ENCODE measurements at regions of chr11 and their contacts with region 1.

Region 1: DNA sequence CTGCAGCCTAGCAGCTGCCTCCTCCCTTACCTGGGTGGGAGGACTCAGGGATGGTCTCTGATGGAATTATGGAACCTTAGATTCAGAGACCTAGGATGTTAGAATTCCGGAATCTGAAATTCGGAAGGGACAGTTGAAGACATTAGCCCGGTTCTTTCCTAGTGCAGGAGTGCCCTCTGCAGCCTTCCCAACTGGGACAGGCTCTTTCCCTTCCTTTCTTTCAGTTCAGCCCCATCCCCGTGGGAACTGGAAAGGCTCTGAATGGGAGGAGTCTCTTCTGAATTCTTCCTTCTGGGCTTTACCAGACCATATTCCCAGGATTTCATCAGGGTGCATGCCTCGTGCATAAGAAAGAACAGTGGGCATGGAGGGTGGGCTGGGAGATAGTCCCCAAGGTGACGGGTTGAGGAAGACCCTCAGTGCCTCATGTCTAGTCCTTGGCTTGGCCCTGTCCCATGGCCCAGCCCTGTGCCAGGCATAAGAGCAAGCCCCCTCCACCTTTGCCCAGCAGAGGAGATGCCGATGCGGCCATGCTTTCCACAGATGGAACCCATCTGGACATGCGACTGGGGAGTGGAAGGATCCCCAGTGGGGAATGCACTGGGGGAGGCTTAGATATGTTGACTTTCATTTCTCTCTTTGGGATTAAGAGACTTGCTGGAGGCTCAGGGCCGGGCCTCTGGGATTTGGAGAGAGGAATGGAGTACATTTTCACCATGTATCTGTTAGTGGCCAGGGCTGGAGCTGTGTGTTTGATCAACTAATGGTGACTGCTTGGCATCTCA is 14.4 kb downstream of the DNAJB13 start:
- DNase-seq: no peak
- H3K4me3 ChIP-seq: no peak overlapping the region
- H3K27ac ChIP-seq: no peak overlapping the region
- H3K4me1 ChIP-seq: peaks cover 0 to 8% of the 10 kb centered on the region in 2 donors
- H3K27me3 ChIP-seq: no peaks in the 10 kb centered on the region
- CTCF ChIP-seq: no peak
- POLR2A ChIP-seq: no peak

Region 2: GRCh38 chr11:74090701-74091100 is 125.4 kb after region 1 on chr11:
- intact Hi-C with region 1: loop called (anchors 10 kb)
- DNase-seq: no peak
- H3K4me3 ChIP-seq: no peak overlapping the region
- H3K27ac ChIP-seq: no peak overlapping the region
- H3K4me1 ChIP-seq: peaks cover 0 to under 1% of the 10 kb centered on the region in 2 donors
- H3K27me3 ChIP-seq: no peaks in the 10 kb centered on the region
- CTCF ChIP-seq: peak in 2 of 6 experiments; percentile 16 to 36
- POLR2A ChIP-seq: no peak

Region 3: DNA sequence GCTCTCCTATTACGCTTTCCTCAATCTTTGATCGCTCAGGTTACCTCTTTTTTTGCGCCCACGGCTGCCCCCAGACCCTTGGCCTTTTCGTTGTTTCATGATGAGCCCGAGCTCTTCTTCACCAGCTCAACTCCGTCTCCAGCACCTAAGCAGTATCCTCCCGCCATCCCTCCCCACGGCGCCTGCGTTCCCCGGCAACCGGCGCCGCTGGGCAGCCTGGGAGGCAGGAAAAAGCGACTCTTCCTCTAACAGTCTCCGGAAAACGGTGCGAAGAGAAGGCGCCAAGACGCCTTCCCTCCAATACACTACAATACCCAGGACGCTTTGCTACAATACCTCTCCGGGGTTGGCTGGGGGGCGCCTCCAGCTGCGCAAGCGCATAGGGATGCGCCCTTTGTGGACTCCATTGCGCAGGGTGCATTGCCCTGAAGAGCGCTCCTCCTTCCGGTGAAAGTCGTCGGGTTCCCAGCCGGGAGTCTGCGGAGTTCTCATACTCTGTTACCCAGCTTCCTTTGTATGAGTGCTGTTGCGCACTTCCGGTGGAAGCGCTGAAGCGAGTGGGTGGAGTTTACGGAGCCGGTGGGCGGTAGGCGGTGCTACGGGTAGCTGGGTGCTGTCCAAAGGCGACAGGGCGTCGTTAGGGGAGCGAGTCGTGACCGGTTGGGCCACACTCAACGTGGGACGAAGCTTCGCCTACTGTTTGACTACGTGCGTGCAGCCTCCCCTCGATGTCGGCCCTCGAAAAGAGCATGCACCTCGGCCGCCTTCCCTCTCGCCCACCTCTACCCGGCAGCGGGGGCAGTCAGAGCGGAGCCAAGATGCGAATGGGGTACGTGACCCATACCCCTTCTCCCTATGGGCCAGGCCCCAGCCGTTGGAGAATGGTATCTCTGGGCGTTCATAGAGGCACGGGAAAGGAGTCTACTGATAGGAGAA is 205.7 kb after region 1 on chr11 and contains the starts of genes C2CD3 and PPME1:
- intact Hi-C with region 1: loop called (anchors 10 kb)
- DNase-seq: peak; percentile 99
- H3K4me3 ChIP-seq: peak within 1 kb of the TSS; percentile 31 to 70 (median 58)
- H3K27ac ChIP-seq: peak within 1 kb of the TSS; percentile 82 to 90 (median 83)
- H3K4me1 ChIP-seq: peaks cover 24 to 27% of the 10 kb centered on the region in 2 donors
- H3K27me3 ChIP-seq: no peaks in the 10 kb centered on the region
- CTCF ChIP-seq: peak in 3 of 6 experiments; percentile 18 to 34 (median 27)
- POLR2A ChIP-seq: peak in 1 of 2 donors; percentile 91
- total RNA-seq, gene C2CD3: 37.8 to 85.8 (median 40.7) TPM
- total RNA-seq, gene PPME1: 32.3 to 55.3 (median 38.8) TPM

Region 4: DNA sequence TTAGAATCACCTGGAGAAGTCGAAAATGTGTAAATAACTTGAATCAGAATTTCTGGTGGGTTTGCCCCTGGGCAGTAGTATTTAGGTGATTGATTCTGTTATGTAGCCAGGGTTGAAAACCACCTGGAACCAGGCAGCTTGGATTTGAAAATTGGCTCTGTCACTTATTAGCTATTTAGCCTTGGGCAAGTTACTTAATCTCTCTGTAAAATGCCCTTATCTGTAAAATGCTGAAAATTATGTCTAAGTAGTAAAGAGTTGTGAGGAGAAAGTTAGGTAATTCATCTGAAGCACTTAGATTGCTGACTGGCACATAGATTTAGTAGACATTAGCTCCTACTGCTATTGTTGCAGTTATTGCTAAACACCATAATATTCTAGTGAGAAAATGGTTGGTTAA is 255.1 kb after region 1 on chr11:
- intact Hi-C with region 1: no loop called
- DNase-seq: no peak
- H3K4me3 ChIP-seq: no peak overlapping the region
- H3K27ac ChIP-seq: peak overlapping the region; percentile 40 to 73 (median 62)
- H3K4me1 ChIP-seq: peaks cover 13 to 16% of the 10 kb centered on the region in 2 donors
- H3K27me3 ChIP-seq: no peaks in the 10 kb centered on the region
- CTCF ChIP-seq: no peak
- POLR2A ChIP-seq: no peak